Right lobe of liver (tissue), 6 donors: ENCODE measurements at regions of chr5 and their contacts with region 1.

Region 1: GRCh38 chr5:172688349-172689217 is 47.5 kb downstream of the NEURL1B start:
- DNase-seq: peak in 1 of 3 donors; percentile 44
- ATAC-seq: peak; percentile 48 to 62 (median 52)
- H3K4me3 ChIP-seq: no peak overlapping the region
- H3K27ac ChIP-seq: peak overlapping the region in 1 of 3 donors; percentile 15
- H3K4me1 ChIP-seq: no peaks in the 10 kb centered on the region
- H3K27me3 ChIP-seq: no peaks in the 10 kb centered on the region
- CTCF ChIP-seq: no peak
- POLR2A ChIP-seq: no peak

Region 2: DNA sequence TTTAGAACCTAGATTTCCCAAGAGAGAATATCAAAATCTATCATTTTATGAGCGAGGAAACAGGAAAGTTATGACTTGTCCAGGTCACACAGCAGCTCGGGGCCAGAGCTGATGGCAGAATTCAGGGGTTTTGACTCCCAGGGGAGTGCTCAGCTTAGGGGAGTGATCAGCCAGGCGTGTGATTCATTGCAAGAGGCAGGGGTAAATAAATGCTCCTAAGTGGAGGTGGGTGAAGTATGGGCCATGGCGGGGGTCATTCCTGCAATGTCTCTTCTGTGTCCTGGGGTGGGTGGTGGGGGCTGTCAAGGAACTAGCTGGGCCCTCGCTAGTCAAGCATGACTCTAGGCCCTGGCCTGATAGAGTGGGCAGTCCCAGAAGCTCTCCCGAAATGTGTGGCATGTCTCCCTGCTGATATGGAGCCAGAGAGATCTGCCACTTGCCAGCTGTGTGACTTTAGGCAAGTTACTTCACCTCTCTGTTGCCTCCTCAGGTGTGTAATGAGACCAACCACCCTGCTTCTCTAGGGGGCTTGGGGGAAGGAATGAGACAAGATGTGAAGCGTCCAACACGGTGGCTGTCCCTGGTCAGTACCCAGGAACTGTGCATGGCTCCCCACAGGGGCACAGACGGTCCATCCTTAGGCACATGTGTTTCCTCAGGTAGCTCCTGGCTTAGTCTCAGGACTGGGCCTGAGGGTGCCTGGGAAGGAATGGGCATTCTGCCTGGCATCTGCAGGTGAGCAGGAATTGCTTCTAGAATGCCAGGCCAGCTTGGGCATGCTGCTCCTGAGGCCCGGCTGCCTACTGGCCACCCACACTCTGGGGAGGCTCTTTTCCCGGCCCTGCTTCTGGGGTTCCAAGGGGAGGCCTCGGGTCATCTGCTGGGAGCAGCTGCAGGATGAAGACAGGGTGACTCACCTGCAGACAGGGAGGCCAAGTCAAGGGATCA is 197.8 kb before region 1 on chr5:
- intact Hi-C with region 1: loop called in 1 of 2 experiments (anchors 5 kb)
- DNase-seq: peak in 1 of 3 donors; percentile 20
- ATAC-seq: no peak
- H3K4me3 ChIP-seq: no peak overlapping the region
- H3K27ac ChIP-seq: no peak overlapping the region
- H3K4me1 ChIP-seq: no peaks in the 10 kb centered on the region
- H3K27me3 ChIP-seq: no peaks in the 10 kb centered on the region
- CTCF ChIP-seq: no peak
- POLR2A ChIP-seq: no peak

Region 3: GRCh38 chr5:173324115-173325001 is 635.8 kb after region 1 on chr5:
- intact Hi-C with region 1: no loop called
- DNase-seq: peak in 2 of 3 donors; percentile 59 to 84
- ATAC-seq: peak in 2 of 4 donors; percentile 13
- H3K4me3 ChIP-seq: no peak overlapping the region
- H3K27ac ChIP-seq: peak overlapping the region in 1 of 3 donors; percentile 37
- H3K4me1 ChIP-seq: peaks cover 0 to 20% (median 11%) of the 10 kb centered on the region in 4 donors
- H3K27me3 ChIP-seq: peaks cover 0 to 17% of the 10 kb centered on the region in 2 donors
- CTCF ChIP-seq: no peak
- POLR2A ChIP-seq: no peak